ENCODE measurements at regions of chr17 and their contacts with region 1.

Region 1: DNA sequence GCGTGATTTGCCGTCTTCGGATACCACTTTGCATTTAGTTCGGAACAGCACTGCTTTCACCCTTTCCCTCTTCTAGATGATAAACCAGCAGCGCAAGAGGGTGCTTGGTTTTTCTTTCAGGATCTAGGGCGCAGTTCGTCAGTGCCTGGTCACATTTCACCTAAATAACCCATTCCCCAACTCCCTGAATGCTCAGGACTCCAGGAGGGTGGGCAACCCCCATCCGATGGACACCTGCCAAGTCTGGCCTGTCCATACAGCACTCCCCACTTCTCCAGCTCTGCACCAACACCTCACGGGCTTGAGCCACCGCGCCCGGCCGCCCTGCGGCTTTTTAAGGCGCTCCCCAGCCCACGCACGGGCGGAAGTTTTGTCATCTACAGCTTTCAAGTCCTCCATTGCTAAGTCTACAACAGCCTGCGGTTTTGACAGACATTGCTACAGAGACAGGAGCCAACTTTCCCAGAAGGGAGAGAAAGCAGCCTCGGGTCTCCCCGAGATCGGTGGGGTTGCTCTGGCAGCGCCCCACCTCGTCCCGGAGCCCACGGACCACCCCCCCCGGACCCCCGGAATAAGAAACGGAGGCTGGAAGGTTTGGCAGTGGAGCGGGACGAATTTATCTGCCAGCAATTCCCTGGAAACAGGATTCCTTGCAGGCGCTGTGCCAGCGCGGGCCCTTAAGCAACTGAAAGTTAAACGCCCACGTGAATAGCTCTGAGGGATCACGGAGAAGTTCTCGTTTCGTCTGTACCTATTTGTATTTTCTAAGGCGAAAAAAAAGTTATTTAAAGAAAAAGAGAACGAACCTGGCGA is 38.6 kb upstream of the SLFN13 start:
- DNase-seq: peak; percentile 90
- H3K4me3 Mint-ChIP-seq: peak overlapping the region; percentile 82
- H3K27ac Mint-ChIP-seq: peak overlapping the region; percentile 83
- H3K4me1 Mint-ChIP-seq: peaks cover 27% of the 10 kb centered on the region
- H3K27me3 Mint-ChIP-seq: no peaks in the 10 kb centered on the region

Region 2: DNA sequence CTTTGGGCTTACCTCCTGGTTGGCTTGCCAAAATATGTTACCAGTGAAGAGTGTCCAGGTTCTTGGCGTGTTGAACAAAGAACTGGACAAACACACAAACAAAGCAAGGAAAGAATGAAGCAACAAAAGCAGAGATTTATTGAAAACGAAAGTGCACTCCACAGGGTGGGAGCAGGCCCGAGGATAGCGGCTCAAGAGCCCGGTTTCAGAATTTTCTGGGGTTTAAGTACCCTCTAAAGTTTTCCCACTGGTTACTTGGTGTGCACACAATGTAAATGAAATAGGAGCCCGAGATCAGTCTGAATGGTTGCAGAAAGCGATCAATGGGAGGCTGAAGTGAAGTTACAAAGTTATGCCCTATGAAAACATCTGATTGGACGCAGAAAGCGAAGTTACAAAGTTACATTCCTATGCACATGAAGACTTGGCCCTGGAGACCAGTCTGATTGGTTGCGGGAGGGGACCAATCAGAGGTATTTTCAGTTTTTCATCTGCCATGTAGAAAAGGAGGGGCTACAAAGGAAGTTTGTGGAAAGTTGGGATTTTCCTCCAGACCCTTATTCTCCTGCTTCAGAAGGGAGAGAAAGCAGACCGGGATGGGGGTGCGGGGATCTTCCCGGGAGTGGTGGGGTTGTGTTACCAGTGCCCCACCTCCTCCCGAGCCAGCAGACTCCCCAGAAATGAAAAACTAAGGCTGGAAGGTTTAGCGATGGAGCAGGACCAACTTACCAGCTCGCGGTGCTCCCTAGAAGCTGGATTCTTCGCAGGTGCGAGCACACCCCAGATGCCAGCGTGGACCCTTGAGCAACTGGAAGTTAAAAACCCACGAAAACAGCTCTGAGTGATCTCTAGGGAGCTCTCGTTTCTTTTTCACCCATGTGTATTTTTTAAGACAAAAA is 54.7 kb before region 1 on chr17 and contains the start of gene SLFN12:
- CTCF ChIA-PET with region 1: no interaction called
- intact Hi-C with region 1: loop called (anchors 1 kb)
- DNase-seq: peak; percentile 66
- H3K4me3 Mint-ChIP-seq: peak within 1 kb of the TSS; percentile 87
- H3K27ac Mint-ChIP-seq: peak within 1 kb of the TSS; percentile 88
- H3K4me1 Mint-ChIP-seq: peaks cover 41% of the 10 kb centered on the region
- H3K27me3 Mint-ChIP-seq: no peaks in the 10 kb centered on the region
- total RNA-seq, gene SLFN12: 5.3 to 5.6 TPM

Region 3: DNA sequence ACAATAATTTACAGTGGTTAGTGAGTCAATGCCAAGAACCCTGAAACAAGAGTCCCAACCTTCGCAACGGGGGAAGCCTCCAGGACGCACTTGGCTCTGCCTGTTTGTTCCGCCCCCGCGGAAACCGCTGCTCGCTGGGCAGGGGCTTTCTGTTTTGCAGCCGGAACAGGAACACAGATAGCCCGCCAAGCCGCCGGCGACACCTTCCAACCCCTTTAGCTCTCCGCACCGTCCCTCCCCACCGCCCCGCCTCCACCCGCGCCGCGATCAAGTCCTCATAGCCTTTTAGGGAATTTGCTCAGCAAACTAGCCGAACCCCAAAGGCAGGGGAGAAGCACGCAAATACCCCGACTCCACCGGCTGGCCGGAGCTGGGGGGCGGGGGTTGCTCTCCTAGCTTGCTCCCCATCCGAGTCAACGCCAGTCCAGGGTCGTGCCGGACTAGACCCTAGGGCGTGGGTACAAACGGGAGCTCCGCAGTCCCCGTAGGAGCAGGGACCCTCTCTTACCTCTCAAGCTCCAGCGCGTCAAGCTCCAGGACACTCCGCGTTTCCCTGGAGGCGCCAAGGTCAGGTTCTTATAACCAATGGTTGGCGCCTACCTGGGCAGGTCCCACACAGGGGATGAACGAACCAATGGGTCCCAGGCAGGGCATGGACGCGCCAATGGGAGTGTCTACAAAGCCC is 38.8 kb before region 1 on chr17 and contains the start of gene SLFN13:
- CTCF ChIA-PET with region 1: interaction called, 3 read pairs
- intact Hi-C with region 1: loop called (anchors 1 kb)
- DNase-seq: peak; percentile 98
- H3K4me3 Mint-ChIP-seq: peak within 1 kb of the TSS; percentile 52
- H3K27ac Mint-ChIP-seq: peak within 1 kb of the TSS; percentile 13
- H3K4me1 Mint-ChIP-seq: peaks cover 12% of the 10 kb centered on the region
- H3K27me3 Mint-ChIP-seq: no peaks in the 10 kb centered on the region
- total RNA-seq, gene SLFN13: 28.6 to 30.1 TPM

Measured in activated naive CD4-positive, alpha-beta T cell treated with anti-CD3 and anti-CD28 coated beads for 36 hours (primary cell).